ENCODE measurements at regions of chr3 and their contacts with region 1.

Region 1: GRCh38 chr3:141311496-141312353 is 56.6 kb upstream of the ZBTB38 start:
- DNase-seq: peak; percentile 95 to 99 (median 96)
- ATAC-seq: peak; percentile 95
- H3K4me3 ChIP-seq: peak overlapping the region; percentile 67
- H3K27ac ChIP-seq: peak overlapping the region; percentile 82
- H3K4me1 ChIP-seq: peaks cover 16 to 29% of the 10 kb centered on the region in 2 experiments
- H3K27me3 ChIP-seq: no peaks in the 10 kb centered on the region
- CTCF ChIP-seq: peak; percentile 92 to 98 (median 96)
- EP300 ChIP-seq: 0 out of 2 replicates have a peak, but pooled peaks have one; percentile 2
- POLR2A ChIP-seq: peak; percentile 95
- RAD21 ChIP-seq: peak; percentile 99

Region 2: GRCh38 chr3:141353652-141354495 is 42.1 kb after region 1 on chr3:
- CTCF ChIA-PET with region 1: interaction called, 3 read pairs
- POLR2A ChIA-PET with region 1: interaction called, 4 read pairs
- in situ Hi-C with region 1: no loop called
- intact Hi-C with region 1: loop called (anchors 2 kb)
- DNase-seq: peak; percentile 31 to 80 (median 46)
- ATAC-seq: peak; percentile 37
- H3K4me3 ChIP-seq: no peak overlapping the region
- H3K27ac ChIP-seq: peak overlapping the region; percentile 26; the same call in 2 of the 3 replicates
- H3K4me1 ChIP-seq: peaks cover 9 to 60% of the 10 kb centered on the region in 2 experiments; a peak in 4 of 5 replicates
- H3K27me3 ChIP-seq: no peaks in the 10 kb centered on the region
- CTCF ChIP-seq: no peak
- EP300 ChIP-seq: peak; percentile 30; the same call in 1 of the 2 replicates
- POLR2A ChIP-seq: no peak
- RAD21 ChIP-seq: 0 out of 4 replicates have a peak, but pooled peaks of 1 of the 2 experiments have one; percentile 4

Region 3: GRCh38 chr3:141360888-141361598 is 49.3 kb after region 1 on chr3:
- CTCF ChIA-PET with region 1: interaction called, 3 read pairs
- POLR2A ChIA-PET with region 1: interaction called, 6 read pairs
- in situ Hi-C with region 1: no loop called
- intact Hi-C with region 1: loop called (anchors 1 kb)
- DNase-seq: peak; percentile 45 to 78 (median 60)
- ATAC-seq: peak; percentile 86
- H3K4me3 ChIP-seq: no peak overlapping the region
- H3K27ac ChIP-seq: peak overlapping the region; percentile 37; the same call in 1 of the 3 replicates
- H3K4me1 ChIP-seq: peaks cover 0 to 30% of the 10 kb centered on the region in 2 experiments; a peak in 3 of 5 replicates
- H3K27me3 ChIP-seq: no peaks in the 10 kb centered on the region
- CTCF ChIP-seq: peak; percentile 77 to 90 (median 81)
- EP300 ChIP-seq: no peak
- POLR2A ChIP-seq: no peak
- RAD21 ChIP-seq: peak; percentile 90 to 93

Region 4: DNA sequence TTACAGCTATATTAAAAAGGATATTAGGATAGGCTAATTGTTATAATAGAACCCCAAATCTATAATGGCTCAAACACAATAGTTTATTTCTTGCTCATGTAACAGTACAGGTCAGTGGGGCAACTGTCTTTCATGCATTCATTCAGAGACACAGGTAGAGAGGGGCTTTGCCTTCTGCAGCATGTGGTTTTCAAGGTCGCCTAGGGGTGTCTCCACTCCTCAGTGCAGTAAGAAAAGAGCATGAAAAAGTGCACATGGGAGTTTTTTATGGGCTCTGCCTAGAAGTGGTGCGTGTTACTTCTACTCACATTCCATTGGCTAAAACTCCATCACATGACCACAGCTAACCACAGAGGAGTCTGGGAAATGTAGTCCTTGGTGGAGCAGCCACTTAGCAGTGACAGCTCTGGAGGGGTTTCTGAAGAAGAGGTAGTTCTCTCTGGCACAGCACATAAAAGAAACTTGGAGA is 58.4 kb after region 1 on chr3:
- CTCF ChIA-PET with region 1: no interaction called
- POLR2A ChIA-PET with region 1: interaction called, 4 read pairs
- in situ Hi-C with region 1: no loop called
- intact Hi-C with region 1: loop called (anchors 2 kb)
- DNase-seq: peak; percentile 82 to 94 (median 87)
- ATAC-seq: peak; percentile 89
- H3K4me3 ChIP-seq: no peak overlapping the region; the same call in 1 of the 2 replicates
- H3K27ac ChIP-seq: peak overlapping the region; percentile 95
- H3K4me1 ChIP-seq: peaks cover 25 to 42% of the 10 kb centered on the region in 2 experiments
- H3K27me3 ChIP-seq: no peaks in the 10 kb centered on the region
- CTCF ChIP-seq: peak; percentile 61 to 73 (median 65)
- EP300 ChIP-seq: peak; percentile 34; the same call in 1 of the 2 replicates
- POLR2A ChIP-seq: peak; percentile 65
- RAD21 ChIP-seq: peak; percentile 49 to 58

Region 5: GRCh38 chr3:141421639-141422330 is 110.1 kb after region 1 on chr3:
- CTCF ChIA-PET with region 1: no interaction called
- POLR2A ChIA-PET with region 1: no interaction called
- in situ Hi-C with region 1: no loop called
- intact Hi-C with region 1: no loop called
- DNase-seq: no peak
- ATAC-seq: no peak
- H3K4me3 ChIP-seq: no peak overlapping the region
- H3K27ac ChIP-seq: no peak overlapping the region
- H3K4me1 ChIP-seq: peaks cover 6 to 14% of the 10 kb centered on the region in 2 experiments; a peak in 4 of 5 replicates
- H3K27me3 ChIP-seq: no peaks in the 10 kb centered on the region
- CTCF ChIP-seq: no peak
- EP300 ChIP-seq: no peak
- POLR2A ChIP-seq: no peak
- RAD21 ChIP-seq: 0 out of 4 replicates have a peak, but pooled peaks of 1 of the 2 experiments have one; percentile 8

Region 6: DNA sequence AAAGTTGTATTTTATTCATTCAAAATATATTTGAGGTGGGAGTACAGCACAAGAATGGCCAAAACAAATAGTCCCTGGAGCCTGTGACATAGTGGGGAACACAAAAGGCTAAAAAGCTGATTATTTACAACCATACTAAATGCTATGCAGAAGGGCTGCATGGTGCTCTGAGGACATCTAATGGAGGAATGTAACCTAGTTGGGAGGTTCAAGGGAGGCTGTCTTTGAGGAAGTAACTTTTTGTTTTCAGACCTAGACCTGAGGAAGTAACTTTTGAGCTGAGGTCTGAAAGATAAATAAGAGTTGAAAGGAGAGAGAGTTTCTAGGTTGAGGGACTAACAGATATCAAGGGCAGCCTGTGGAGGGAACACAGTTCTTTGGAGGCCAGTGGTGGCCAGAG is 140.3 kb after region 1 on chr3:
- CTCF ChIA-PET with region 1: interaction called, 36 read pairs
- POLR2A ChIA-PET with region 1: interaction called, 25 read pairs
- in situ Hi-C with region 1: loop called (anchors 5 kb)
- intact Hi-C with region 1: loop called (anchors 1 kb)
- DNase-seq: peak; percentile 26 to 83 (median 48)
- ATAC-seq: peak; percentile 89
- H3K4me3 ChIP-seq: no peak overlapping the region
- H3K27ac ChIP-seq: peak overlapping the region; percentile 66
- H3K4me1 ChIP-seq: peaks cover 22 to 47% of the 10 kb centered on the region in 2 experiments
- H3K27me3 ChIP-seq: no peaks in the 10 kb centered on the region
- CTCF ChIP-seq: peak; percentile 76 to 97 (median 87)
- EP300 ChIP-seq: no peak
- POLR2A ChIP-seq: no peak
- RAD21 ChIP-seq: peak; percentile 99

Region 7: GRCh38 chr3:141561426-141562034 is 249.8 kb after region 1 on chr3:
- CTCF ChIA-PET with region 1: interaction called, 19 read pairs
- POLR2A ChIA-PET with region 1: interaction called, 4 read pairs
- in situ Hi-C with region 1: loop called (anchors 5 kb)
- intact Hi-C with region 1: loop called (anchors 1 kb)
- DNase-seq: peak; percentile 34 to 73 (median 41)
- ATAC-seq: peak; percentile 40; the same call in 2 of the 3 replicates
- H3K4me3 ChIP-seq: no peak overlapping the region
- H3K27ac ChIP-seq: no peak overlapping the region
- H3K4me1 ChIP-seq: peaks cover 10 to 19% of the 10 kb centered on the region in 2 experiments; a peak in 4 of 5 replicates
- H3K27me3 ChIP-seq: no peaks in the 10 kb centered on the region
- CTCF ChIP-seq: peak; percentile 71 to 99 (median 85)
- EP300 ChIP-seq: no peak
- POLR2A ChIP-seq: no peak
- RAD21 ChIP-seq: peak; percentile 98 to 99

Region 8: DNA sequence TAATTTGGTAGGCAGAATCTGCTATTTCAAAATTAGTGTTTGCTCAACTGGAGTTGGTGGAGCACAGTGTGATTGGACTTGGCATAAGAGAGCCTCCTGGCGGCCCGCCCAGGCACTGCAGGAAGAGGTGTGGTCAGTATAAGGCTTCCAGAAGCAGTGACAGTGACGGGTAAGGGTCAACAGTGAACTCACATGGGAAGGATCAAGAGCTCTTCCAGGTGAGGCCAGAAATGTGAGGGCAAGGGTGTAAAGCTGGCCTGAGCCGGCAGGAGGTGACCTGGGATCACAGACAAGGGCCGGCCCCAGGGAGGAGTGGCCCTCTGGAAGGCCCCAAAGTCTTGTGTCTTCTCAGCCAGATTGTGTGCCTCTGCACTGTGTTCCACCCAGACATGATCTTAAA is 333.2 kb after region 1 on chr3:
- CTCF ChIA-PET with region 1: no interaction called
- POLR2A ChIA-PET with region 1: no interaction called
- in situ Hi-C with region 1: no loop called
- intact Hi-C with region 1: loop called (anchors 5 kb)
- DNase-seq: peak; percentile 72 to 82 (median 73)
- ATAC-seq: peak; percentile 91
- H3K4me3 ChIP-seq: no peak overlapping the region
- H3K27ac ChIP-seq: no peak overlapping the region
- H3K4me1 ChIP-seq: peaks cover 0 to 11% of the 10 kb centered on the region in 2 experiments; a peak in 3 of 5 replicates
- H3K27me3 ChIP-seq: no peaks in the 10 kb centered on the region
- CTCF ChIP-seq: peak; percentile 73 to 94 (median 82)
- EP300 ChIP-seq: no peak
- POLR2A ChIP-seq: no peak
- RAD21 ChIP-seq: peak; percentile 57 to 82